ENCODE measurements at regions of chr2 and their contacts with region 1.

Region 1: GRCh38 chr2:166384774-166385173 is 9.0 kb upstream of the SCN9A start:
- DNase-seq: peak; percentile 45
- H3K4me3 Mint-ChIP-seq: no peak overlapping the region
- H3K27ac Mint-ChIP-seq: no peak overlapping the region
- H3K4me1 Mint-ChIP-seq: peaks cover 6% of the 10 kb centered on the region
- H3K27me3 Mint-ChIP-seq: peaks cover 43% of the 10 kb centered on the region
- CTCF ChIP-seq: peak; percentile 50

Region 2: DNA sequence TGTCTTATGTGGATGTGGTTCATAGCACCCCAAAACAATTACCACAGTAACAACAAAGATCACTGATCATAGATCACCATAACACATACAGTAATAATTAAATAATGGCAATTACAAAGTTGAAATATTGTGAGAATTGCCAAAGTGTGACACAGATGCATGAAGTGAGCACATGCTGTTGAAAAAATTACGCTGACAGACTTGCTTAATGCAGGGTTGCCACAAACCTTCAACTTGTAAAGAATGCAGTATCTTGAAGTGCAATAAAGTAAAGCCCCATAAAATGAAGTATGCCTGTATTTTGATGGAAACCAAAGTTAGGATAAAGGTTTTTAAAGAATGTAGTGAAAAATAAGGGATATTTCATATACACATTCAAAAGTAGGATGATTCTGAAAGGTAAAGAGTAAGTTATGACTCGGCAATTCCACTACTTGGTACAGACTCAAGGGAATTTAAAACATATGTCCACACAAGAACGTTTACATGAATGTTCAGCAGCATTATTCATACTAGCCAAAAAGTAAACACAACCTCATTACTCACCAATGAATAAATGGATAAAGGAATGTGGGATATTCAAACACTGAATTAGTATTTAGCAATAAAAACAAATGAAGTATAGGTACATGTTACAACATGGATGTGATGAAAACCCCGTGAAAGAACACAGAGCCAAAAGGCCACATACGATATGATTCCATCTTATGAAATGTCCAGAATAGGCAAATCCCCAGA is 70.6 kb before region 1 on chr2:
- CTCF ChIA-PET with region 1: interaction called, 10 read pairs
- POLR2A ChIA-PET with region 1: no interaction called
- intact Hi-C with region 1: no loop called
- DNase-seq: peak; percentile 48
- H3K4me3 Mint-ChIP-seq: no peak overlapping the region
- H3K27ac Mint-ChIP-seq: peak overlapping the region; percentile 8
- H3K4me1 Mint-ChIP-seq: no peaks in the 10 kb centered on the region
- H3K27me3 Mint-ChIP-seq: no peaks in the 10 kb centered on the region
- CTCF ChIP-seq: no peak

Region 3: DNA sequence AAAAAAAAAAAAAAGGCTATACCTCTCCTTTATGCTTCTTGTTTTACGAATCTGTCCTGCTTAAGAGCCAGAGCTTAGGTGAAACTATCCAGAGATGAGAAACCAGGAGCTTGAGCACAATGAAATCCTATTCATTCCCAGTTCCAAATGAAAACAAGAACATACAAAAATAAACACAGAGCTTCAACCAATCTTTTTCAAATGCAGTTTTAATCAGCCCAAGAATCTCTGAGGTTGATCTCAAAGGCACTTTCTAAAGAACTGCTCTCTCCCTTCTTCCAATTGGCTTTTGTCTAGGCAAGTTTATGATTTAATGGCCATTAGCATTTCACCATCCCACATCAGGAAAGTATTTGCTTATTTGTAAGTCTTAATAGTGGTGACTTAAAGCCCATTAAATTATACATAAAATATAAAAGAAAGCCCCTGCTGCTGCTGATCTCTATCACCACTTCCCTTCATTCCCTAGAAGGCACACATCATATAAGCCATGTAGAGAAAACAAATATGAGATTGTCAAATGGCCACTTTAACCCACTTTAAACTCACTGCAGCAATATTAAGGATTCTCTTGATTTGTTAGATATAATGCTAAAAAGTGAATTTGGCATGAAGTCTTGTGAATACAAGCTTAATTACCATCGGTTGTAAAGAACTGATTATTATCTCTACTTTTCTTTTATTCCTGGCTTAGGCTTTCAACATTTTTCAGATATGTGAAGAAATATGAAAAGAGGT is 20.2 kb after region 1 on chr2:
- CTCF ChIA-PET with region 1: interaction called, 11 read pairs
- POLR2A ChIA-PET with region 1: no interaction called
- intact Hi-C with region 1: loop called (anchors 5 kb)
- DNase-seq: no peak
- H3K4me3 Mint-ChIP-seq: no peak overlapping the region
- H3K27ac Mint-ChIP-seq: no peak overlapping the region
- H3K4me1 Mint-ChIP-seq: peaks cover 6% of the 10 kb centered on the region
- H3K27me3 Mint-ChIP-seq: no peaks in the 10 kb centered on the region
- CTCF ChIP-seq: no peak

Region 4: DNA sequence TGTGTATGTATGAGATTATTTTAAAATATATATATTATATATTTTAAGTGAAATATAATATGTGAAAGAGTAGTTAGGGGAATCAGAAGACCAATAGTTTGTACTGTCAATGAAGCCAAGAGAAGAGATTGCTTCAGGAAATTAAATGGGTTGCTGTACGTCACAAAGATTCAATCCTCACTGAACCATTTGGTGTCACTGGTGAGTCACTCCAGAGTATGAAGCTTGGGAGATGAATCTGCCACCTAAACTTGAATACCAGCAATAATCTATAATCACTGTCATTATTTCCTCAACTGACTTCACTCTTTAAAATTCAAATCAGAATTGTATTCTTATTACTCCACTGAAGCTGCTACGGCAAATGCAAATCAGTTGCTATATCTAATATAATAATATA is 32.9 kb after region 1 on chr2:
- CTCF ChIA-PET with region 1: interaction called, 13 read pairs
- POLR2A ChIA-PET with region 1: no interaction called
- intact Hi-C with region 1: loop called (anchors 2 kb)
- DNase-seq: peak; percentile 58
- H3K4me3 Mint-ChIP-seq: no peak overlapping the region
- H3K27ac Mint-ChIP-seq: no peak overlapping the region
- H3K4me1 Mint-ChIP-seq: no peaks in the 10 kb centered on the region
- H3K27me3 Mint-ChIP-seq: peaks cover 6% of the 10 kb centered on the region
- CTCF ChIP-seq: no peak